ENCODE measurements at regions of chr6 and their contacts with region 1.

Region 1: GRCh38 chr6:78259935-78260334 is 607.1 kb downstream of the MEI4 start:
- DNase-seq: no peak
- ATAC-seq: no peak
- H3K4me3 ChIP-seq: no peak overlapping the region
- H3K27ac ChIP-seq: no peak overlapping the region
- H3K4me1 ChIP-seq: no peaks in the 10 kb centered on the region
- H3K27me3 ChIP-seq: no peaks in the 10 kb centered on the region
- CTCF ChIP-seq: no peak

Region 2: DNA sequence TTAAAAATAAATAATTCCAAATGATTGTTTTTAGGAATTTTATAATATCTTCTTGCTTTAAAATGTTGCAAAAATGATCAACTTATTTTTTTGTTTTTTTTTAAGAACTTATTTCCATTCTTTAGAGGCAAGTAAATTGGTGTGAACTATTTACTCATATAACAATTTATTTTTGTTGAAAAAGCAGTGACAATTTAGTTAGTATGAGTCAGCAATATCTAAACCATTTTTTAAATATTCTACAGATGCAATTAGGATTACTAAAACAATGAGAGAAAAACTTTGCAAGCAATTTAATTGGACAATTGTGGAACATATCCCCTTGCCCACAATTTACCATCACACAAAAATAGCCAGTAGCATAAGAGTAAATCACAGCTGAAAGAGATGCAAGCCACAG is 287.6 kb before region 1 on chr6:
- intact Hi-C with region 1: no loop called
- DNase-seq: no peak
- ATAC-seq: no peak
- H3K4me3 ChIP-seq: no peak overlapping the region
- H3K27ac ChIP-seq: no peak overlapping the region
- H3K4me1 ChIP-seq: no peaks in the 10 kb centered on the region
- H3K27me3 ChIP-seq: no peaks in the 10 kb centered on the region
- CTCF ChIP-seq: no peak

Region 3: DNA sequence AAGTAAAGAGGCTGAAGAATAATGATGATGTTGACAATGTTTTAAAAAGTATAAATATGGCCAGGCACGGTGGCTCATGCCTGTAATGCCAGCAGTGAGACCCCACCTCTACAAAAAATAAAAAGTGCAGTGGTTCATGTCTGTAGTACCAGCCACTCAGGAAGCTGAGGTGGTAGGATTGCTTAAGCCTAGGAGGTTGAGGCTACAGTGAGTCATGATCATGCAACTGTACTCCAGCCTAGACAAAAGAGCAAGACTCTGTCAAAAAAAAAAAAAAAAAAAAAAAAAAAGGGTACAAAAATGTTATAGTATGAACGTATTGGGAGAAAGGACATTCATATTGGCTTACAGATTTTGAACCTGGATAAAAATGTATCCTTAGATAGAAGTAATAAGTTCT is 64.3 kb after region 1 on chr6:
- intact Hi-C with region 1: loop called (anchors 5 kb)
- DNase-seq: no peak
- ATAC-seq: no peak
- H3K4me3 ChIP-seq: no peak overlapping the region
- H3K27ac ChIP-seq: no peak overlapping the region
- H3K4me1 ChIP-seq: no peaks in the 10 kb centered on the region
- H3K27me3 ChIP-seq: no peaks in the 10 kb centered on the region
- CTCF ChIP-seq: no peak